HepG2 (cell line): ENCODE measurements at regions of chr16 and their contacts with region 1.

Region 1: DNA sequence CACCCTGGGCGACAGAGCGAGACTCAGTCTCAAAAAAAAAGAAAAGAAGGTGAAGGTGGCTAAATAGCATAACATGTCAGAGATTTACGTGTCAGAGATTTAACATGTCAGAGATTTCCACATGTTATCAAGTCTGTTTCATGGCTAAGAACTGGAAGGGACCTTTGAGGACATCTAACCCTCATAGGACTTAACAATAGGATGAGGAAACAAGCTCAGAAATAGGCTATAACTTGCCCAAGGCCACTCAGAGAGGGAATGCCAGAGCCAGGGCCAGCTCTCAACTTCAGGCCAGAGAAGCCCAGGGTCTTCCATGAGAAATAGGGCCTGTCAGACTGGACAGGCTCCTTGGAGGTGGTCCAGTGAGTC is 26.8 kb upstream of the ZNF629 start:
- DNase-seq: no peak
- ATAC-seq: no peak
- H3K4me3 ChIP-seq: peak overlapping the region; percentile 38 to 70 (median 59); a peak in 5 of 6 replicates
- H3K27ac ChIP-seq: peak overlapping the region; percentile 91
- H3K4me1 ChIP-seq: peaks cover 47% of the 10 kb centered on the region
- H3K27me3 ChIP-seq: no peaks in the 10 kb centered on the region
- CTCF ChIP-seq: no peak
- EP300 ChIP-seq: no peak
- POLR2A ChIP-seq: no peak
- RAD21 ChIP-seq: no peak

Region 2: DNA sequence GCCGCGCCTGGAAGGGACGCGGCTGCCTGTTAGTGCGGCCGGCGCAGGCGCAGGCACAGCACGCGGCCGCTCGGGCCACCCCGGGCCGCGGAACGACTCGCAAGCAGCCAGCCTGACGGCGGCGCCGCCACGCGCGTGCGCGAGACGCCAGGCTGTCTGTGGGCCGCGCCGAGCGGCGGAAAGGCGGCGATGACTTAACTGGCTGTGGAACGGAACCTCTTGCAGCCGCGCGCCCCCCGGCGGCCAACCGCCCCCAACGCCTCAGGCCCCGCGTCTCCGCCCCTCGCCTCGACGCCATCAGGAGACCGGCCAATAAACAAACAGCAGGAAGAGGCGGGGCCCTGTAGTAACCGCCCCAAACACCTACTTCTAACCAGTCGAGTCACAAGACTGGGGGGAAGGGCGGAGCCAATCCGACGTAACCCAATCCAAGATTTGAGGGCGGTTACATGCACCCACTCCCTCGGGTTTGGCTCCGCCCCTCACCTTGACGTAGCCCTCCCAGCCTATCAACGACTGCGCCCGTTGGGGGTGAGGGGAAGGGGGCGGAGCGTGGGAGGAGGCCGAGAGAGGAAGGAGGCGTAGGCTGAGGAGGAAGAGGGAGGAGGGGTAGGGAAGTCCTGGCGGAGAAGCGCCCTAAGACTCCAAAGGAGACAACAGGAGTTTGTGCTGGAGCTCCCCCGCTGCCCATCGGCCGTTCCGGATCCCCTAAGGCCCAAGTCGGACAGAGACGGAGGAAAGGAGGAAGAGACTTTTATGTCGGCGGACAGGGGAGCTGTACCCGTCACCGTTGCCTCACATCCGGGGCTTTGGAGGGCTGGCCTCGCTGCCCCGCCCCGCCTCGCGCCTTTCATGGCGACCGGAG is 155.7 kb before region 1 on chr16 and contains the start of gene FBRS:
- CTCF ChIA-PET with region 1: no interaction called
- POLR2A ChIA-PET with region 1: no interaction called
- in situ Hi-C with region 1: no loop called
- intact Hi-C with region 1: no loop called
- DNase-seq: peak; percentile 100
- ATAC-seq: peak; percentile 85
- H3K4me3 ChIP-seq: peak within 1 kb of the TSS; percentile 78 to 89 (median 82)
- H3K27ac ChIP-seq: peak within 1 kb of the TSS; percentile 93
- H3K4me1 ChIP-seq: peaks cover 36% of the 10 kb centered on the region
- H3K27me3 ChIP-seq: no peaks in the 10 kb centered on the region; a peak in 1 of 5 replicates
- CTCF ChIP-seq: peak; percentile 97
- EP300 ChIP-seq: peak in 1 of 2 experiments; percentile 22; a peak in 2 of 4 replicates
- POLR2A ChIP-seq: peak; percentile 76 to 86
- RAD21 ChIP-seq: peak; percentile 97
- total RNA-seq, gene FBRS: 10.1 and 16.2 TPM in 2 replicates

Region 3: GRCh38 chr16:30700491-30700890 is 113.3 kb before region 1 on chr16:
- CTCF ChIA-PET with region 1: no interaction called
- POLR2A ChIA-PET with region 1: no interaction called
- in situ Hi-C with region 1: no loop called
- intact Hi-C with region 1: no loop called
- DNase-seq: no peak
- ATAC-seq: no peak
- H3K4me3 ChIP-seq: peak overlapping the region in 2 of 3 experiments; percentile 75 to 96; a peak in 2 of 6 replicates
- H3K27ac ChIP-seq: no peak overlapping the region
- H3K4me1 ChIP-seq: peaks cover 24% of the 10 kb centered on the region
- H3K27me3 ChIP-seq: no peaks in the 10 kb centered on the region
- CTCF ChIP-seq: no peak
- EP300 ChIP-seq: no peak
- POLR2A ChIP-seq: no peak
- RAD21 ChIP-seq: no peak

Region 4: GRCh38 chr16:30775392-30776188 is 38.2 kb before region 1 on chr16:
- CTCF ChIA-PET with region 1: no interaction called
- POLR2A ChIA-PET with region 1: interaction called, 13 read pairs
- in situ Hi-C with region 1: no loop called
- intact Hi-C with region 1: loop called (anchors 5 kb)
- DNase-seq: peak; percentile 83
- ATAC-seq: peak; percentile 84
- H3K4me3 ChIP-seq: peak overlapping the region; percentile 63 to 88 (median 75)
- H3K27ac ChIP-seq: peak overlapping the region; percentile 89
- H3K4me1 ChIP-seq: peaks cover 36% of the 10 kb centered on the region
- H3K27me3 ChIP-seq: no peaks in the 10 kb centered on the region; a peak in 1 of 5 replicates
- CTCF ChIP-seq: peak; percentile 34
- EP300 ChIP-seq: peak; percentile 6 to 39; a peak in 1 of 4 replicates
- POLR2A ChIP-seq: peak; percentile 83 to 86
- RAD21 ChIP-seq: peak; percentile 44

Region 5: GRCh38 chr16:30786936-30787612 is 26.7 kb before region 1 on chr16 and contains the start of gene ZNF629:
- CTCF ChIA-PET with region 1: interaction called, 3 read pairs
- POLR2A ChIA-PET with region 1: interaction called, 21 read pairs
- in situ Hi-C with region 1: no loop called
- intact Hi-C with region 1: no loop called
- DNase-seq: peak; percentile 79
- ATAC-seq: peak; percentile 83
- H3K4me3 ChIP-seq: peak within 1 kb of the TSS; percentile 99 to 100 (median 100)
- H3K27ac ChIP-seq: peak within 1 kb of the TSS; percentile 78
- H3K4me1 ChIP-seq: peaks cover 30% of the 10 kb centered on the region
- H3K27me3 ChIP-seq: peaks cover 3 to 5% of the 10 kb centered on the region in 2 experiments; a peak in 2 of 5 replicates
- CTCF ChIP-seq: peak; percentile 43
- EP300 ChIP-seq: peak in 1 of 2 experiments; percentile 46; a peak in 2 of 4 replicates
- POLR2A ChIP-seq: peak; percentile 47 to 52
- RAD21 ChIP-seq: peak; percentile 62
- total RNA-seq, gene ZNF629: 14.3 and 16.5 TPM in 2 replicates

Region 6: DNA sequence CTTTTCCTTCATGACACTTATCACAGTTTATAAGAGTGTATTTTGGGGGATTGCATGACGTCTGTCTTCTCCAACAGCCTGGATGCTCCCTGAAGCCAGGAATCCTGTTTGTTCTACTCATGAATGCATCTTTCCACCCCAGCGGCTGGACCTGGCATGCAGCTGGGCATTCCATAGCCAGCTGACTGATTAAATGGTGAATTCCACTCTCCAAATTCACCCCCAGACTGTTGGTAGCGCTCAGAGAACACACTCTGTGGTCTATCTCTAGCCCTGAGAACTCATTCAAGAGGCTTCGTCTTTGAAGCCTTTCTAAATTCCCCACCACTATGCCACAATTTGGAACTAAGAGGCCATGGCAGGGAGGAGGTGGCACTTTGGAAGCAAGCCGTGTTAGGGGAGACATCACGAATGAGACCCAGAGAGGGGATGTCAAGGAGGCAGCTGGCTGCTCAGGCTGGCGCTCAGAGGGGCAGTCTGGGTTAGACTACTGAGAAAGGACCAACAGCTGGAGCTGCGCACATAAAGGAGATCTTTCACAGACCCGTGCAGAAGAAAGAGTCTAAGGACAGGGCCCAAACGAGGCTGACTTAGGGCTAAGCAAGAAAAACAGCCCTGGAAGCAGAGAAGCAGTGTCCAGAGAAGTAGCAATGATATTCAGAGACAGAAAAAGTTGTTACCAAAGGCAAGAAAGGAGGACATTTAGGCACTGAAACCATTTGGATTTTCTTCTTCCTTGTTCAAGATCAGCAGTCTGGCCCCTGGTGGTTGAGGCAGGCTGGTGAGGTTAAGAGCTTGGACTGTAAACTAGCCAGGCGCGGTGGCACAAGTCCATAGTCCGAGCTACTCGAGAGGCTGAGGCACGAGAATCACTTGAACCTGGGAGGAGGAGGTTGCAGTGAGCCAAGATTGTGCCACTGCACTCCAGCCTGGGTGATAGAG is 15.6 kb after region 1 on chr16:
- CTCF ChIA-PET with region 1: interaction called, 5 read pairs
- POLR2A ChIA-PET with region 1: interaction called, 11 read pairs
- in situ Hi-C with region 1: no loop called
- intact Hi-C with region 1: no loop called
- DNase-seq: peak; percentile 68
- ATAC-seq: peak; percentile 84
- H3K4me3 ChIP-seq: peak overlapping the region; percentile 2 to 48 (median 19); a peak in 3 of 6 replicates
- H3K27ac ChIP-seq: peak overlapping the region; percentile 33
- H3K4me1 ChIP-seq: peaks cover 50% of the 10 kb centered on the region
- H3K27me3 ChIP-seq: no peaks in the 10 kb centered on the region
- CTCF ChIP-seq: peak; percentile 61
- EP300 ChIP-seq: no peak
- POLR2A ChIP-seq: no peak
- RAD21 ChIP-seq: no peak

Region 7: DNA sequence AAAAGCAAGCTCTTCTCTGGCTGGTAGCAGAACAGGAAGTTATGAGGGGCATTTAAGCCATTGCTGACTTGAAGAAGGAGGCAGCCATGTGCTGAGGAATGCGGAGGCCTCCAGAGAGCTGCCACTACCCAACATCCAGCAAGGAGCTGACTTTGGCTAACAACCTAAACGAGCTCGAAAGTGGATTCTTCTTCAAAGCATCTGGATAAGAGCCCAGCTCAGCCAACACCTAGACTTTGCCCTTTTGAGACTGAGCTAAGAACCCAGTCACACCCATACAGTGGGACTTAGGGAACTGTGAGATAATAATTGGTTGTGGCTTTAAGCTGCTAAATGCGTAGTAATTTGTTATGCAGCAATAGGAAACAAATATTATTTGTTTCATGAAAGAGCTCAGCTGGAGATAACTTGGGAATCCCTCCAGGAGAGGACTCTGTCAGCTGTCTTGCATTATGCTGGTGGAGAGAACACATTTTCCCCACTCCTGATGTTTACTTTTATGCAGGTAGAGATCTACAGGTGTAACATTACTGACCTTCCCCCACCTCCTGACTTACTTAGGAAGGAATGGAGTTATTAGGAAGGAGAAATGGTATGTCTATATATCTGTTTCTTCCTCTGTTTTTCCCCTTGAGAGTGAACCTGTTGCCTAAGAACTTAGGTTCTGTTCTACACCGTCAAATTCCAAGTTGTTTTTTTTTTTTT is 25.9 kb after region 1 on chr16:
- CTCF ChIA-PET with region 1: interaction called, 5 read pairs
- POLR2A ChIA-PET with region 1: interaction called, 22 read pairs
- in situ Hi-C with region 1: no loop called
- intact Hi-C with region 1: loop called (anchors 1 kb)
- DNase-seq: no peak
- ATAC-seq: peak; percentile 5; the same call in 2 of the 3 replicates
- H3K4me3 ChIP-seq: peak overlapping the region in 1 of 3 experiments; percentile 21; a peak in 1 of 6 replicates
- H3K27ac ChIP-seq: peak overlapping the region; percentile 36
- H3K4me1 ChIP-seq: peaks cover 49% of the 10 kb centered on the region
- H3K27me3 ChIP-seq: no peaks in the 10 kb centered on the region
- CTCF ChIP-seq: no peak
- EP300 ChIP-seq: no peak
- POLR2A ChIP-seq: no peak
- RAD21 ChIP-seq: no peak

Region 8: DNA sequence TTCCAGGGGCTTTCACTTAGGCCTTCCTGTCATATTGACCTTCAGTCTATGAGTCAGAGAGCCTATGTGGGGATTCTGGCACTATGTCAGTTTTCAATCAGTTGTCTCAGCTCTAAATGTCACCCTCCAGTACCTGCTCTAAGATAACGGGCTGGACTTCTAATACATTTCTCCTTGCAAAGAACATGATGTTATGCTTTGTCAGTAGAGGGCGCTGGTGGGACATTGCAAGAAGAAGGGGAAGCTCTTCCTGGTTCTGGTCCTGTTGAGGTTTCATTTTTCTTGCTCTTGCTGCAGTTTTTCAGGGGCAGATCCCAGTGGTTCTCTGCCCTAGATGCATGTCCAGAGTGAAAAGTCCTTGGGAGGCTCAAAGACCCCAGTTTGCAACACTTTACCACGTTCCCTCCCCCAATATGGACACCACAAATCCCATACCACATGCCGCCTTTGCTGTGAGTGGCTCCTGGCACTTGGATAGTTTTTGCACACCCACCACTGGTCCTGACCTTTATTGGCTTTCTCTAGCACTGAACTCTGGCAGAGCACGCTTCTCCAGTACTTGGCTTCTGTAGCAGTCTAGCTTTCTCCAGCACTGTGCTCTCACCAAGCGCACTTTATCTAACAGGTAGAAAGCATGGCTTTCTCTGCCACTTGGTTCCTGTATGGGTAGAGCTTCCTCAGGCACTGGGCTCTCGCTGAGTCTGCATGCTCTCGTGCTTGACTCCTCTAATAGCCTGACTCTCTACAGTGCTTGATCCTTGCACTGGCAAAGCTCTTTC is 31.1 kb after region 1 on chr16:
- CTCF ChIA-PET with region 1: interaction called, 5 read pairs
- POLR2A ChIA-PET with region 1: interaction called, 22 read pairs
- in situ Hi-C with region 1: no loop called
- intact Hi-C with region 1: loop called (anchors 1 kb)
- DNase-seq: peak; percentile 97
- ATAC-seq: peak; percentile 86
- H3K4me3 ChIP-seq: peak overlapping the region; percentile 32 to 66 (median 45)
- H3K27ac ChIP-seq: peak overlapping the region; percentile 64
- H3K4me1 ChIP-seq: peaks cover 33% of the 10 kb centered on the region
- H3K27me3 ChIP-seq: no peaks in the 10 kb centered on the region
- CTCF ChIP-seq: peak; percentile 96
- EP300 ChIP-seq: no peak; a peak in 1 of 4 replicates
- POLR2A ChIP-seq: peak; percentile 23 to 44; a peak in 3 of 4 replicates
- RAD21 ChIP-seq: peak; percentile 89

Region 9: DNA sequence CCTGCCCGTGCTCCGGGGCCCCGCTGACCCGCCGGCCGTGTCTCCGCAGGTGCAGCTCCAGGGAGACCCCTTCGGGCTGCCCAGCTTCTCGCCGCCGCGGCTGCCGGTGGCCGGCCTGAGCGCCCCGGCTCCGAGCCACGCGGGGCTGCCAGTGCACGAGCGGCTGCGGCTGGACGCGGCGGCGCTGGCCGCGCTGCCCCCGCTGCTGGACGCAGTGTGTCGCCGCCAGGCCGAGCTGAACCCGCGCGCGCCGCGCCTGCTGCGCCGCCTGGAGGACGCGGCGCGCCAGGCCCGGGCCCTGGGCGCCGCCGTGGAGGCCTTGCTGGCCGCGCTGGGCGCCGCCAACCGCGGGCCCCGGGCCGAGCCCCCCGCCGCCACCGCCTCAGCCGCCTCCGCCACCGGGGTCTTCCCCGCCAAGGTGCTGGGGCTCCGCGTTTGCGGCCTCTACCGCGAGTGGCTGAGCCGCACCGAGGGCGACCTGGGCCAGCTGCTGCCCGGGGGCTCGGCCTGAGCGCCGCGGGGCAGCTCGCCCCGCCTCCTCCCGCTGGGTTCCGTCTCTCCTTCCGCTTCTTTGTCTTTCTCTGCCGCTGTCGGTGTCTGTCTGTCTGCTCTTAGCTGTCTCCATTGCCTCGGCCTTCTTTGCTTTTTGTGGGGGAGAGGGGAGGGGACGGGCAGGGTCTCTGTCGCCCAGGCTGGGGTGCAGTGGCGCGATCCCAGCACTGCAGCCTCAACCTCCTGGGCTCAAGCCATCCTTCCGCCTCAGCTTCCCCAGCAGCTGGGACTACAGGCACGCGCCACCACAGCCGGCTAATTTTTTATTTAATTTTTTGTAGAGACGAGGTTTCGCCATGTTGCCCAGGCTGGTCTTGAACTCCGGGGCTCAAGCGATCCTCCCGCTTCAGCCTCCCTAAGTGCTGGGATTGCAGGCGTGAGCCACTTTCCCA is 88.5 kb after region 1 on chr16:
- CTCF ChIA-PET with region 1: no interaction called
- POLR2A ChIA-PET with region 1: interaction called, 10 read pairs
- in situ Hi-C with region 1: no loop called
- intact Hi-C with region 1: no loop called
- DNase-seq: peak; percentile 33
- ATAC-seq: peak; percentile 87
- H3K4me3 ChIP-seq: peak overlapping the region; percentile 58 to 77 (median 60)
- H3K27ac ChIP-seq: peak overlapping the region; percentile 65
- H3K4me1 ChIP-seq: peaks cover 75% of the 10 kb centered on the region
- H3K27me3 ChIP-seq: no peaks in the 10 kb centered on the region
- CTCF ChIP-seq: peak; percentile 28; the same call in 1 of the 2 replicates
- EP300 ChIP-seq: no peak; a peak in 1 of 4 replicates
- POLR2A ChIP-seq: peak; percentile 49 to 70; a peak in 3 of 4 replicates
- RAD21 ChIP-seq: peak; percentile 95